HEK293 (cell line): ENCODE measurements at regions of chr11 and their contacts with region 1.

Region 1: DNA sequence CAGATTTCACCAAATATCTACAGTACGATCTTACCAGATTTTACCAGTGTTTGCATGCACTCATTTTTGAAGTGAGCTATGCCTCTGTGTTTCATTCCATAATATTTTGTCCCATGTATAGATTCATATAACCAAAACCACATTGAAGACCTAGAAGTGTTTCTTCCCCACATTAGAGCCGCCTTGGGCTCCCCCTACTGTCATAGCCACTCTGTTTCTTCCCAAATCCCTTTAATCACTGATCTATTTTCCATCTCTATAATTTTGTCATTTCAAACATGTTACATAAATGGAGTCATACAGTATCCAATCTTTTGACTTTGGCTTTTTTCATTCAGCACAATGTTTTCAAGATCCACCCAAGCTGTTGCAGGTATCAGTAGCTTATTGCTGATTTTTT is 12.7 kb downstream of the MRGPRX3 start:
- H3K4me3 ChIP-seq: no peak overlapping the region
- H3K27ac ChIP-seq: no peak overlapping the region
- H3K4me1 ChIP-seq: no peaks in the 10 kb centered on the region
- CTCF ChIP-seq: no peak

Region 2: DNA sequence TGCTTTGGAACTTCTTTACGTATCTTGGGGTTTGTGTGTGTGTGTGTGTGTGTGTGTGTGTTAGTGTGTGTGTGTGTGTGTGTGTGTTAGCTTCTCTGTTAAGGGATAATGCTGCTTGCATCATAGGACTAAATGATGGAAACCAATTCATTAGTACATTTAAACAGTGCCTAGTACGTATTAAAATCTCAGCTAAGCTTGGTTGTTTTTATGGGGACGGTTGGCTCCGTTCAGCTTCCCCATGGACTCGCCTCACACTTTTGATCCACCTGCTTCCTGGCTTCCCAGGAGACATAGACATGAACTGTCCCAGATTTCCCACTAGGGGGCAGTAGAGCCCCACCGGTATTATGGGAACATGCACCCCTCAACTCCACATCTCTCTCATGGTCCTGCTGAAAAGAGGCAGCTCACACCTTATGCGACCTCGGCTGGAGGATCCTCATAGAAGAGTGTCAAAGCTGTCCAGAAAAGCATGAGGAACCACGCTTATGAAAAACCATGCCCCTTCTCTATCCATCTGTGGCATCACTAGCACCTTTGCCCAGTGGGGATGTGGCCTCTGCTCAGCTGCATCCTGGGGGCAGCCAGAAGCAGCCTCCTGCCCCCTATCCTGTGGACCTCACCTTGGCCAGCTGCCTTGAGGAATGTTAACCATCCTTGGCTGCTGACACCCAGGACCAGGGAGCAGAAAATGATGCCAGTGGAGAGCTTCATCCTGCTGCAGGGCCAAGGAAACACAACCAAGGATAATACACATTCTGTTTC is 29.5 kb before region 1 on chr11:
- CTCF ChIA-PET with region 1: interaction called, 16 read pairs
- POLR2A ChIA-PET with region 1: no interaction called
- H3K4me3 ChIP-seq: no peak overlapping the region
- H3K27ac ChIP-seq: no peak overlapping the region
- H3K4me1 ChIP-seq: no peaks in the 10 kb centered on the region
- CTCF ChIP-seq: peak; percentile 26; the same call in 1 of the 2 replicates